Ascending aorta (tissue), 2 donors: ENCODE measurements at regions of chrX and their contacts with region 1.

Region 1: GRCh38 chrX:120499301-120500072 is 30.4 kb upstream of the LAMP2 start:
- DNase-seq: no peak
- H3K4me3 ChIP-seq: no peak overlapping the region
- H3K27ac ChIP-seq: no peak overlapping the region
- H3K4me1 ChIP-seq: no peaks in the 10 kb centered on the region
- H3K27me3 ChIP-seq: no peaks in the 10 kb centered on the region
- CTCF ChIP-seq: no peak

Region 2: GRCh38 chrX:120585702-120586101 is 86.2 kb after region 1 on chrX:
- intact Hi-C with region 1: no loop called
- DNase-seq: no peak
- H3K4me3 ChIP-seq: no peak overlapping the region
- H3K27ac ChIP-seq: no peak overlapping the region
- H3K4me1 ChIP-seq: no peaks in the 10 kb centered on the region
- H3K27me3 ChIP-seq: no peaks in the 10 kb centered on the region
- CTCF ChIP-seq: no peak

Region 3: DNA sequence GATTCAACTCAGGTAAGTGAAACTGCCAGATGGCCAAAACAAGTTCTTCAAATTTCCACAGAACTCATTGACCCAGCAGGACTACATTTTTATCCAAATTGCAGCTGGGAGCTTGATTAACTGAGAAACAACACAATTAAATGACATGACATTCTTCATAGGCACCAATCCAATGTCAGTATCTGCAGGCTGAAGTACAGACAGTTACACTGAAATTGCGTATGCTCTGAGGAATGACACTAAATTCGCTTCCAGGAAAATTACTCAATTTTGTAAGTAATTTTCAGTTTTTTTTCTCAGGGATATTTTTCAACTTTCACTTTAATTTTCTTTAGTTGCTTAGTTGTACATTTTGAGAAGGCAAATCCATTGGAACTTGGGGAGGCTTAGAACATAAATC is 125.9 kb after region 1 on chrX:
- intact Hi-C with region 1: no loop called
- DNase-seq: no peak
- H3K4me3 ChIP-seq: no peak overlapping the region
- H3K27ac ChIP-seq: no peak overlapping the region
- H3K4me1 ChIP-seq: no peaks in the 10 kb centered on the region
- H3K27me3 ChIP-seq: no peaks in the 10 kb centered on the region
- CTCF ChIP-seq: no peak

Region 4: DNA sequence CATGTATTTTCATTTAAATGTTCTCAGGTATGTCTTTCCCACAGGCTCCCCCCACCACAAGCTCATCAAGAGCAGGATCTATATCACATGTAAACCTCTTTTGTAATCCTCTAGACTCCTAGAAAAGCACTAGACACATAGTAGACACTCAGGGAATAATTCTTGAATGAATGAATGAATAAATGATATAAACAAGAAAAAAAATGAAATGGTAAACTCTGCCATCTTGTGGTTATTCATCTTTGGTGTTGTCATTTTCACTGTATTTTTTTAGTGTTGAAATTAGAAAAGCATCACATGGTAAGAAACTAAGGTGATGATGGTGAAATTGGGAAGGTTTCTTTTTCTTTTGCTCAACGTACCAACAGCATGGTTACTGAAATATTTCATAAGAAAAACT is 164.6 kb after region 1 on chrX:
- intact Hi-C with region 1: loop called (anchors 10 kb)
- DNase-seq: no peak
- H3K4me3 ChIP-seq: no peak overlapping the region
- H3K27ac ChIP-seq: no peak overlapping the region
- H3K4me1 ChIP-seq: no peaks in the 10 kb centered on the region
- H3K27me3 ChIP-seq: no peaks in the 10 kb centered on the region
- CTCF ChIP-seq: peak in 1 of 3 experiments; percentile 12

Region 5: GRCh38 chrX:120769576-120770341 is 270.3 kb after region 1 on chrX:
- intact Hi-C with region 1: loop called (anchors 5 kb)
- DNase-seq: no peak
- H3K4me3 ChIP-seq: no peak overlapping the region
- H3K27ac ChIP-seq: no peak overlapping the region
- H3K4me1 ChIP-seq: no peaks in the 10 kb centered on the region
- H3K27me3 ChIP-seq: no peaks in the 10 kb centered on the region
- CTCF ChIP-seq: peak in 1 of 3 experiments; percentile 28